ENCODE measurements at regions of chr14 and their contacts with region 1.

Region 1: DNA sequence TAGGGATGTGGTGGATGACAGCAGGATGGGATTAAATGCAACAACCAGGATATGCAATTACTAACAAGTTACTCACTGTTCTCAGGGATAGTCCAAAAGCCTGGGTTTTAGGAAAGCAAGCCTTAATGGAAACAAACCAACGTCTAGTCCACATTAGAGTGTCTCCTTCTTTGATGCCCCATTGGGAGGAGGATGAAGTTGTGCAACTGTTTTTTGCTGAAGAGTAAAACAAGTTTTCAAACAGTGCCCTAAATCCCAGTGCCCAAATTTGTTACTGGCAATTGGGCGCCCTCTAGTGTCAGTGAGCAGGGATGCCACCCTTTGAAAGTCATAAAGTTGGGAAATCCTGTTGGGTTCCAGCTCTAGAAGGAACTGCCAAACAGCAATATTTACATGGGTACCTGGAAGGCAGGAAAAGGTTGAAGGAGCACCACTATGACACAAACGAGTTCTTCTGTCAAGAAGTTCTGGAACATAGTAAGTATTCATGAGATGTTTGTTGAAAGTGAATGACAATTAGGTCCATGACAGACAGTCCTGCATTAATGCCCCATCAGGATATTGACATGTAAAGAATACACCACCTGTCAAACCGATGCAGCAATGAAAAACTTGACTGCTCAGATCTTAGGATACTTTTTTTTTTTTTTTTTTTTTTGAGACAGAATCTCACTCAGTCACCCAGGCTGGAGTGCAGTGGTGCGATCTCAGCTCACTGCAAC is 11.1 kb upstream of the DPF3 start:
- DNase-seq: peak; percentile 53
- ATAC-seq: peak; percentile 79
- H3K4me3 ChIP-seq: no peak overlapping the region
- H3K27ac ChIP-seq: no peak overlapping the region
- H3K4me1 ChIP-seq: peaks cover 21% of the 10 kb centered on the region
- H3K27me3 ChIP-seq: peaks cover 0 to 6% of the 10 kb centered on the region in 2 experiments; a peak in 2 of 5 replicates
- CTCF ChIP-seq: peak; percentile 89
- EP300 ChIP-seq: no peak
- POLR2A ChIP-seq: no peak
- RAD21 ChIP-seq: peak; percentile 88

Region 2: GRCh38 chr14:72758420-72758819 is 146.6 kb before region 1 on chr14:
- CTCF ChIA-PET with region 1: interaction called, 18 read pairs
- POLR2A ChIA-PET with region 1: no interaction called
- in situ Hi-C with region 1: no loop called
- intact Hi-C with region 1: loop called (anchors 1 kb)
- DNase-seq: no peak
- ATAC-seq: peak; percentile 43; the same call in 2 of the 3 replicates
- H3K4me3 ChIP-seq: no peak overlapping the region
- H3K27ac ChIP-seq: no peak overlapping the region
- H3K4me1 ChIP-seq: no peaks in the 10 kb centered on the region
- H3K27me3 ChIP-seq: no peaks in the 10 kb centered on the region
- CTCF ChIP-seq: peak; percentile 46
- EP300 ChIP-seq: no peak
- POLR2A ChIP-seq: no peak
- RAD21 ChIP-seq: peak; percentile 52; the same call in 1 of the 2 replicates